ENCODE measurements at regions of chrX and their contacts with region 1.

Region 1: GRCh38 chrX:150478496-150479492 is 89.6 kb upstream of the MTM1 start:
- DNase-seq: peak; percentile 61
- H3K4me3 Mint-ChIP-seq: peak overlapping the region; percentile 62
- H3K27ac Mint-ChIP-seq: peak overlapping the region; percentile 82
- H3K4me1 Mint-ChIP-seq: peaks cover 62% of the 10 kb centered on the region
- H3K27me3 Mint-ChIP-seq: no peaks in the 10 kb centered on the region

Region 2: GRCh38 chrX:149938427-149939270 is 540.1 kb before region 1 on chrX and contains the start of gene EOLA2:
- CTCF ChIA-PET with region 1: no interaction called
- POLR2A ChIA-PET with region 1: no interaction called
- intact Hi-C with region 1: loop called (anchors 10 kb)
- DNase-seq: peak; percentile 95
- H3K4me3 Mint-ChIP-seq: peak within 1 kb of the TSS; percentile 85
- H3K27ac Mint-ChIP-seq: peak within 1 kb of the TSS; percentile 99
- H3K4me1 Mint-ChIP-seq: no peaks in the 10 kb centered on the region
- H3K27me3 Mint-ChIP-seq: no peaks in the 10 kb centered on the region
- total RNA-seq, gene EOLA2: 32.4 to 33.7 TPM

Region 3: DNA sequence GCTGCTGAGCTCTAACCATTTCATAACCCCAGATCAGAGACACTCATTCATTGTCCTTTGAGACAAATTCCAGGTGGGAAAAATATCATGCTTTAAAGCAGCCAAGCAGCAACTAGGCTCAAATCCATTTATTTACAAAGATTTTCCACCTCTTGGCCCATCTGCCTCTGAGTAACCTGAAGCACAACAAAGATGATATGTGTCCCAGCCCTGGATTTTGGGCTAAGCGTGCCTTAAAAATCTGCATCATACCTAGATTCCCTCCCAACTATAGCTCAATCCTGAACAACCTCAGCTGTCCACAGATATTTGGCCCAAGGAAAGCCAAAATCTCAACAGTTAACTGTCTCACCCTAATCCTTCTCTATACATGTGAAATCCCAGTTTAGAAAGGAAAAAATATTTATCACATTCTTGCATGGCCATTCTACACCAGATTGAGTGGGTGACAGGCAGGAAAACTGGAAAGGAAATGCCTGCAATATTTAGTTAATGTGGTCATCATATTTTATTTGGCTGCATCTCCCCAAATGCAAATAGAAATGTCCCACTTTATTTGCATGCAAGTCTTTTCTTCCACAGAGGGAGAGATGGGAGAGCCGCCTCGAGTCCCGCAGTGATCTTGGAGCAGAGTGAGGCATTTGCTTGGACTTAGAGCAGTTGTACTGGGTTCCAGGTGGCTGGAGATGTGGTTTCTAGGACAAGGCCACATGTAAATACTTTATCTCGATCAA is 394.1 kb before region 1 on chrX:
- CTCF ChIA-PET with region 1: no interaction called
- POLR2A ChIA-PET with region 1: no interaction called
- intact Hi-C with region 1: no loop called
- DNase-seq: no peak
- H3K4me3 Mint-ChIP-seq: no peak overlapping the region
- H3K27ac Mint-ChIP-seq: no peak overlapping the region
- H3K4me1 Mint-ChIP-seq: no peaks in the 10 kb centered on the region
- H3K27me3 Mint-ChIP-seq: no peaks in the 10 kb centered on the region

Region 4: GRCh38 chrX:150450519-150451177 is 28.1 kb before region 1 on chrX:
- CTCF ChIA-PET with region 1: interaction called, 8 read pairs
- POLR2A ChIA-PET with region 1: no interaction called
- intact Hi-C with region 1: loop called (anchors 2 kb)
- DNase-seq: peak; percentile 41
- H3K4me3 Mint-ChIP-seq: no peak overlapping the region
- H3K27ac Mint-ChIP-seq: no peak overlapping the region
- H3K4me1 Mint-ChIP-seq: peaks cover 15% of the 10 kb centered on the region
- H3K27me3 Mint-ChIP-seq: no peaks in the 10 kb centered on the region